ENCODE measurements at regions of chr20 and their contacts with region 1.

Region 1: GRCh38 chr20:62065669-62066338 is at the start of gene TAF4:
- DNase-seq: peak; percentile 64
- H3K4me3 ChIP-seq: peak within 1 kb of the TSS; percentile 54 to 64
- H3K27ac ChIP-seq: peak within 1 kb of the TSS; percentile 87 to 90
- H3K4me1 ChIP-seq: peaks cover 17% of the 10 kb centered on the region
- H3K27me3 ChIP-seq: no peaks in the 10 kb centered on the region
- CTCF ChIP-seq: no peak
- POLR2A ChIP-seq: peak; percentile 73
- total RNA-seq, gene TAF4: 19.9 to 57.1 TPM

Region 2: DNA sequence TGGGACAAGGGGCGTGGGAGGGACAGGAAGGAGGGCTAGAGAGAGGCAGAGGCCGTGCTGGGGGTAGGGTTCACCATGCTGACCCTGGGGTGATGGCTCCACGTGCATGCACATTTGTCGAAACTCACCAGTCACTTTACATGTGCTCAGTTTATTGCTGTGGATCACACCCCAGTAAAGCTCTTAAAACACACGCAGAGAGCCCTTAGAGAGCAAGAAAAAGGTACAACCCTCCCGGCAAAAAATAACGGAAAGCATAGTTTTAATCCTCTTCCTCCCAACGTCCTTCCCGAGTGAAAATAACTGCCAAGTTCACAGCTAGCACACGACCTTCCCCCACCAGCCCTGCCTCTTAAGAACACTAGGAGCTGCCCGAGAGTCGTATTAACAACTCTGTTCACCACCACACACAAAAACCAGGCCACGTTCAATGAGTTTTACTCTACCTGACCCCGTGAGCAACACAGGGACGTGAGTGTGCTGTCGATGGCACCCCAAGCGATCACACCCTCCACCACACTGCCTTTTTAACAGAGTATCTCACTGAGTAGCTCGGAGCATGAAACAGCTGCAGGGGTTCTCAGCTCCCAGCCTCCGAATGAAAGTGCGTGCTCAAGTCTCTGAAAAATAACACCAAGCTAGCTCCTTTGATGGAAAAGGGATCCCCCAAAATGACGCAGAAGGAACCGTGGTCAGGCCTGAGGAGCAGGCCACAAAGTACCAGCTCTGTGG is 39.8 kb before region 1 on chr20:
- intact Hi-C with region 1: loop called (anchors 5 kb)
- DNase-seq: no peak
- H3K4me3 ChIP-seq: no peak overlapping the region
- H3K27ac ChIP-seq: no peak overlapping the region
- H3K4me1 ChIP-seq: peaks cover 3% of the 10 kb centered on the region
- H3K27me3 ChIP-seq: no peaks in the 10 kb centered on the region
- CTCF ChIP-seq: peak in 2 of 4 experiments; percentile 18 to 36
- POLR2A ChIP-seq: no peak

Region 3: GRCh38 chr20:62121776-62122631 is 56.2 kb after region 1 on chr20 and contains the start of gene LSM14B:
- intact Hi-C with region 1: loop called (anchors 2 kb)
- DNase-seq: peak; percentile 96
- H3K4me3 ChIP-seq: peak within 1 kb of the TSS; percentile 82 to 93
- H3K27ac ChIP-seq: peak within 1 kb of the TSS; percentile 96 to 98
- H3K4me1 ChIP-seq: peaks cover 10% of the 10 kb centered on the region
- H3K27me3 ChIP-seq: no peaks in the 10 kb centered on the region
- CTCF ChIP-seq: peak in 1 of 4 experiments; percentile 10
- POLR2A ChIP-seq: peak; percentile 72
- total RNA-seq, gene LSM14B: 39.7 to 87.1 TPM

Region 4: GRCh38 chr20:62143118-62143973 is 77.5 kb after region 1 on chr20 and contains the starts of genes PSMA7 and SS18L1:
- intact Hi-C with region 1: loop called (anchors 5 kb)
- DNase-seq: peak; percentile 82
- H3K4me3 ChIP-seq: peak within 1 kb of the TSS; percentile 81 to 92
- H3K27ac ChIP-seq: peak within 1 kb of the TSS; percentile 91 to 98
- H3K4me1 ChIP-seq: peaks cover 11% of the 10 kb centered on the region
- H3K27me3 ChIP-seq: no peaks in the 10 kb centered on the region
- CTCF ChIP-seq: peak in 1 of 4 experiments; percentile 11
- POLR2A ChIP-seq: peak; percentile 91
- total RNA-seq, gene PSMA7: 176 to 250 TPM
- total RNA-seq, gene SS18L1: 17.9 to 32.7 TPM

Region 5: GRCh38 chr20:62183426-62184142 is 117.8 kb after region 1 on chr20:
- intact Hi-C with region 1: no loop called
- DNase-seq: no peak
- H3K4me3 ChIP-seq: peak overlapping the region; percentile 74 to 79
- H3K27ac ChIP-seq: peak overlapping the region; percentile 84 to 87
- H3K4me1 ChIP-seq: peaks cover 4% of the 10 kb centered on the region
- H3K27me3 ChIP-seq: no peaks in the 10 kb centered on the region
- CTCF ChIP-seq: no peak
- POLR2A ChIP-seq: no peak

Region 6: GRCh38 chr20:62302341-62303058 is 236.7 kb after region 1 on chr20 and contains the start of gene ADRM1:
- intact Hi-C with region 1: no loop called
- DNase-seq: peak; percentile 95
- H3K4me3 ChIP-seq: peak within 1 kb of the TSS; percentile 84 to 91
- H3K27ac ChIP-seq: peak within 1 kb of the TSS; percentile 98 to 99
- H3K4me1 ChIP-seq: peaks cover 25% of the 10 kb centered on the region
- H3K27me3 ChIP-seq: no peaks in the 10 kb centered on the region
- CTCF ChIP-seq: peak; percentile 95 to 99 (median 98)
- POLR2A ChIP-seq: peak; percentile 57
- total RNA-seq, gene ADRM1: 149 to 207 TPM

Region 7: DNA sequence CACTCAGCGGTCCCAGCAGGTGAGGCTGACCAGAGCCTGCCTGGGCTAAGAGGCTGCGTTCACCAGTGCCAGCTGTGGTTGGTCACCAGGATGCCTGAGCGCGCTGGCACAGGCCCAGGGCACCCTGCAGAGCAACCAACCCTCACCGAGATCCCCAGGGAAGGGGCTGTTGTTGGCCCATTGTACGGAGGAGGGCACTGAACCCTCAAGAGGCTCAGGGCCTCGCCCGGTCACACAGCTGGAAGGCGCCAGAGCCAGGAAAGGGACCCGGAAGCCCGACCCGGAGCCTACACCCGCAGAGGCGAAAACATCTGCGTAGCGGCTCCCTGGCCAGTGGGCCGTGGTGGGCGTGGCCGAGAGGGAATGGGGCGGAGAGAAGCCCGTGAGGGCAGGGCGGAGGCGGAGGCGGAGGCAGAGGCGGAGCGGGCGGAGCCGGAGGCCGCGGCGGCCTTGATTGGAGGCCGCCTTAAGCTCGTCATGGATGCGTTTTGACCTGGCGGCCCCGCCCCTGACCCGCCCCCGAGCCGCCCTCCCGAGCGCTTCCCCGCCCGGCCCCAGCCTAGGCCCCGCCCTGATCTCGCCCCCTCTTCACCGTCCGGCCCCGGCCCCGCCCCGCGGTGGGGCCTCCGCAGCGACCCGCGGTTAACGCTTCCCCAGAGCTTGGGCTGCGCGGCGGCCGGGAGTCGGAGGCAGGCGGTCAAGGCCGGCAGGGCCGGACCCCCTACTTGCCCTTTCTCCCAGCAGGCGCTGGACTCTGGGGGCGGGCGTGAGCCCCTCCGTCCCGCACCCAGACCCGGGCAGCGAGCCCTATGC is 728.3 kb after region 1 on chr20:
- intact Hi-C with region 1: loop called (anchors 10 kb)
- DNase-seq: peak; percentile 93
- H3K4me3 ChIP-seq: peak overlapping the region; percentile 63 to 77
- H3K27ac ChIP-seq: peak overlapping the region; percentile 89 to 91
- H3K4me1 ChIP-seq: peaks cover 9% of the 10 kb centered on the region
- H3K27me3 ChIP-seq: no peaks in the 10 kb centered on the region
- CTCF ChIP-seq: peak in 1 of 4 experiments; percentile 3
- POLR2A ChIP-seq: peak; percentile 90